Right ventricle myocardium inferior (tissue), 1 donor: ENCODE measurements at regions of chr2 and their contacts with region 1.

Region 1: DNA sequence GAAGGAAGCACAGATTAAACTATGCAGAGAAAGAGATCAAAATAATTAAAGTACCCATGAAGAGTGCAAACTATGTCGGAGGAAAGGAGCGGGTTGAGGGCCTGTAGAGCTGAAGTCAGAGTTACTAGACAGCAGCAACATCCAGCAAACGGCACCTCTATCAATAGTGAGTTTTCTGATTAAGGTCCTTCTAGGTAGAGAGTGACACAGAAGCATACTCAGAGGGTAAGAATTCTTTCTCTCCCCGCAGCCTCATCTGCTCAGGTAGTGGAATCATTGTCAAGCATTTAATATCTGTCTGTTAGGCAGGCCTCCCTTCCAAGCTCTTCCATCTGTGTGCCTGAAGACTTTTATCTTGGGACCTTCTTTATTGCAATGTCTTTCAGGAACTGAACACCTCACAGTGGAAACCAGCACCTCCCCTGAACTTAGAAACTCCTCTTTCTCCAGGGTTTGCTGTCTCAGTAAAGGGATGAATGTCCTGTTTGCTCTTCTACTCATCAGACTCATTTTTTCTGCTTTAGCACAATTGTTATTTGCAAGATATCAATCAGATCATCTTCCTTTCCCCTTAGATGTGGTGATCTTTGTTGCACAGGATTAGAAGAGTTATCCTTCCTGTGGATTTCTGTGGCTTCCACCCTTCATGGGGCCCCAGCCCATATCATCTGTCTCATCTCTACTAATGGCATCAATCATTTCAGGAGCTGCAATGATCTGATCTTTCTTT is 28.8 kb downstream of the SP140 start:
- DNase-seq: no peak
- ATAC-seq: no peak

Region 2: DNA sequence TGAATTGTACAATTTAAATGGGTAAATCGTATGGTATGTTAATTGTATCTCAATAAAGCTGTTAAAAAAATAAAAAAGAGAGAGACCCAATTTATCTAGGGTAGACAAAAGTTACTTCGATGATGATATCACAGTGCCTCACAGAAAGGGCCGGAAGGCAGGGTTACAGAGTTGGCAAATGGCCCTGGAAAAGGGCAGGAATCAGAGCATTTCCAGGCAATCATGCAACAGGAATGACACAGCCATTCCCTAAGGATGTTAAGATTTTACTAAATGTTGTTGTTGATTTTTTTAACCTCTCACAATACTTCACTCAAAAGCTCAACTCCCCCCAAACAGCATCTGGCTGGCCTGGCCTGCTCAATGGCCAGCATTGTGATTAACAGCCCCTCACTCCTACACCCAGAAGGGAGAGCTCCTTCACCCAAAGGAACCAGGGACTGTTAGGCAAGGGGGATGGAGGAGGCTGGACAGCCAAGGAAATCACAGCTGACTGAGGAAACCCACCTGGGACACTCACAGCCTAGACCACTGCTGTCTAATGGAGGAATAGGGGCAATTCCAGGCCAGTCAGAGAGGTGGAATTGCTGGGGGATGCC is 154.0 kb after region 1 on chr2:
- intact Hi-C with region 1: loop called (anchors 10 kb)
- DNase-seq: no peak
- ATAC-seq: peak; percentile 52

Region 3: DNA sequence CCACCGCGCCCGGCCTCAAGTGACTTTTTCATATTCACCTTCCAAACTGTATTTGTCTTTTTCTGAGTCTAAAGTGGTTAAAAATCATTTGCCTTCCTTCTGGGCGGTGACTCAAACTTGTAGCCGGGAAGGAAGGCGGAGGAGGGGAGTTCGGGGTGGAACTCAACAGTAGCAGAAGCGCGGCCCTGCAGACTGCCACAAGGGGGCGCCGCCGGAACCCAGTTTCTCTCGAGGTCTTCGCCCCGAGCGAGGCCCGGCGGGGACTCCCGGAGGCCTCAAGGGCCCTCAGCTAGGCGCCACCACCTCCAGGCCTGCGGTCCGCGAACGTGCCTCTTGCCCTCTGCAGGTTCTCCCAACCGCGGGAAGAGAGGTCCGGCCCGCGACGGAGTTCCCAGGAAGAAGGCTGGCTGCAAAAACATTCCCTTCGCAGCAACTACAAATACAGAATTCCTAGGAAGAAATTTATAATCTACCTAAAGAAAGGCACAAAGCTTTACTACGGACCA is 593.6 kb after region 1 on chr2:
- intact Hi-C with region 1: no loop called
- DNase-seq: peak; percentile 92
- ATAC-seq: peak; percentile 81